ENCODE measurements at regions of chr10 and their contacts with region 1.

Region 1: GRCh38 chr10:86399879-86400704 is 33.5 kb upstream of the GRID1 start:
- DNase-seq: peak; percentile 97 to 98
- H3K4me3 ChIP-seq: peak overlapping the region; percentile 53 to 71 (median 60)
- H3K27ac ChIP-seq: peak overlapping the region; percentile 48 to 93 (median 82)
- H3K4me1 ChIP-seq: peaks cover 28 to 31% of the 10 kb centered on the region in 2 donors
- H3K27me3 ChIP-seq: no peaks in the 10 kb centered on the region
- CTCF ChIP-seq: peak; percentile 88 to 98 (median 94)
- POLR2A ChIP-seq: peak; percentile 18 to 60

Region 2: DNA sequence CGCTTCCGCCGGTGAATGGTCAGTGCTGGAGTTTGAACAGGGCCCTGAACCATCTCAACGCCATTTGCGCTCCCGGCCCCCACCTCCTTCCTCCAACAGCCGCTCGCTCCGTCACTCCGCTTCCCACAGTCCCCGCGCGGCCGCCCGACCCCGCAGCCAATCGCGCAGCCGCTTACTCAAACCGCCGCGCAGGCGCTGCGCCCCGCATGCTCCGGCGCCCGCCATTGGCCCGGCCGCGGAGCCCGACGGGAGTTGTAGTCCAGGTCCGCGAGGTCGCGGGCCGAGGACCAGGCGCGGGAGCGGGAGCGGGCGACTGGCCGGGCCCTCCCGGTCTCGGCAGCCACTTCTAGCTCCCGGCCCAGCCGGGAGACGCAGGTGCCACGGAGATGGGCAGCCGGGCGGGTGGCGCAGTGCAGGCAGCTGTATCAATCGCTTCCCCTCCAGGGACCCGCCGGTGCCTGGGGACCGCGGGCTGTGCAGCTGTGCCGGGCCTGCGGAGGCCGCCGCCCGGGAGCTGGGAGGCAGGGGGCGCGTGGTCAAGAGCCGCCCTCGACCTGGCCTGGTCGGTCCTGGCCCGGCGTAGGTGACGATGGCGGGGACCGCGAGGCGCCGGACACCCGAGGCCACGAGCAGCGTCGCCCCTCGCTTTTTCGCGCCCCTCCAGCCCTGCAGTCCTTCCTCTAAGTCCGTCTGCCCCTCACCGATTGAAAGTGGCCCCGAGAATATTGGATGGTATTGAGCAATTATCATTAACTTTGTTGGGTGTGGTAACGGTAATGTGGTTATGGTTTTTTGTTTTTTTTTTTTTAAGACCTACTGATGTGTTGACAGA is 121.8 kb after region 1 on chr10 and contains the start of gene WAPL:
- intact Hi-C with region 1: loop called (anchors 5 kb)
- DNase-seq: peak; percentile 96 to 97
- H3K4me3 ChIP-seq: peak within 1 kb of the TSS; percentile 79 to 97 (median 96)
- H3K27ac ChIP-seq: peak within 1 kb of the TSS; percentile 85 to 97 (median 89)
- H3K4me1 ChIP-seq: peaks cover 57 to 69% of the 10 kb centered on the region in 2 donors
- H3K27me3 ChIP-seq: no peaks in the 10 kb centered on the region
- CTCF ChIP-seq: no peak
- POLR2A ChIP-seq: peak; percentile 8 to 89
- total RNA-seq, gene WAPL: 44.2 to 62.1 (median 51.7) TPM

Region 3: GRCh38 chr10:86585037-86585725 is 185.1 kb after region 1 on chr10:
- intact Hi-C with region 1: loop called (anchors 2 kb)
- DNase-seq: peak; percentile 71 to 75
- H3K4me3 ChIP-seq: no peak overlapping the region
- H3K27ac ChIP-seq: peak overlapping the region in 1 of 3 donors; percentile 75
- H3K4me1 ChIP-seq: peaks cover 0 to 17% of the 10 kb centered on the region in 2 donors
- H3K27me3 ChIP-seq: no peaks in the 10 kb centered on the region
- CTCF ChIP-seq: peak; percentile 84 to 99 (median 97)
- POLR2A ChIP-seq: no peak